ENCODE measurements at regions of chr10 and their contacts with region 1.

Region 1: GRCh38 chr10:23438550-23439441 is at the start of gene OTUD1:
- DNase-seq: peak; percentile 93
- H3K4me3 Mint-ChIP-seq: peak within 1 kb of the TSS; percentile 83
- H3K27ac Mint-ChIP-seq: peak within 1 kb of the TSS; percentile 83
- H3K4me1 Mint-ChIP-seq: peaks cover 20% of the 10 kb centered on the region
- H3K27me3 Mint-ChIP-seq: no peaks in the 10 kb centered on the region
- CTCF ChIP-seq: no peak
- total RNA-seq, gene OTUD1: 12.1 and 14.9 TPM in 2 replicates

Region 2: DNA sequence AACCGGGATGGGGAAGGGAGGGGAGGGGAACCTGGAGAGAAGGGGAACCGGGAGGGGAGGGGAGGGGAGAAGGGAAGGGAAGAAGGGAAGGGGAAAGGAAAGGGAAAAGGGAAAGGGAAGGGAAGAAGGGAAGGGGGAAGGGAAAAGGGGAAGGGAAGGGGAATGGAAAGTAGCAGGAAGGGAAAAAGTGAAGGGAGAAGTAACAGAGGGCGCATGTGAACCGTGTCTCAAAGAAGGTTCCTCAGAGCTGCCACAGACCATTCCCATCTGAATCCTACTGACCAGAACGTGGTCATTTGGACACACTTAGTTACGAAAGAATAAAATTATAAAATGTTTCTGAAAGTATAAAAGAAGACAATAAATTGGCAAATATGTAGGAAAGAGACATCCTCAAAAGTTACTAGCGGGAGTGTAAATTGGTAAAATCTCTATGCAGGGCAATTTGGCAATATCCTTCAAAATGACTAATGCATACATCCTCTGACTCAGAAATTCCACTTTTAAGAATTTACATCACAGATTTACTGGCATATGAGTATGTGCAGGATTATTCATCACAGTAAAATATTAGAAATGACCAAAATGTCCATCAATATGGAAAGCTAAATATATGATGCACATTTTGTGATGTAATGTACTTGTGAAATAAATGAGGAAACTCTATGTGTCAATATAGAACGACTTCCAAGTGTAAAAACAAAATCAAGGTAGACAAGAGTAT is 107.1 kb before region 1 on chr10:
- CTCF ChIA-PET with region 1: interaction called, 3 read pairs
- POLR2A ChIA-PET with region 1: interaction called, 34 read pairs
- intact Hi-C with region 1: no loop called
- DNase-seq: peak; percentile 88
- H3K4me3 Mint-ChIP-seq: no peak overlapping the region
- H3K27ac Mint-ChIP-seq: peak overlapping the region; percentile 11
- H3K4me1 Mint-ChIP-seq: no peaks in the 10 kb centered on the region
- H3K27me3 Mint-ChIP-seq: no peaks in the 10 kb centered on the region
- CTCF ChIP-seq: no peak

Region 3: GRCh38 chr10:23362879-23363792 is 75.7 kb before region 1 on chr10:
- CTCF ChIA-PET with region 1: interaction called, 3 read pairs
- POLR2A ChIA-PET with region 1: interaction called, 14 read pairs
- intact Hi-C with region 1: no loop called
- DNase-seq: no peak
- H3K4me3 Mint-ChIP-seq: no peak overlapping the region
- H3K27ac Mint-ChIP-seq: no peak overlapping the region
- H3K4me1 Mint-ChIP-seq: peaks cover 24% of the 10 kb centered on the region
- H3K27me3 Mint-ChIP-seq: no peaks in the 10 kb centered on the region
- CTCF ChIP-seq: no peak

Region 4: GRCh38 chr10:23419655-23420329 is 19.0 kb before region 1 on chr10:
- CTCF ChIA-PET with region 1: interaction called, 5 read pairs
- POLR2A ChIA-PET with region 1: interaction called, 13 read pairs
- intact Hi-C with region 1: no loop called
- DNase-seq: peak; percentile 54
- H3K4me3 Mint-ChIP-seq: no peak overlapping the region
- H3K27ac Mint-ChIP-seq: peak overlapping the region; percentile 27
- H3K4me1 Mint-ChIP-seq: peaks cover 10% of the 10 kb centered on the region
- H3K27me3 Mint-ChIP-seq: no peaks in the 10 kb centered on the region
- CTCF ChIP-seq: no peak

Measured in MCF 10A (cell line).